ENCODE measurements at regions of chr7 and their contacts with region 1.

Region 1: GRCh38 chr7:101138213-101138870 is 11.4 kb downstream of the SERPINE1 start:
- DNase-seq: peak; percentile 46 to 92 (median 84)
- ATAC-seq: peak; percentile 94
- H3K4me3 ChIP-seq: no peak overlapping the region
- H3K4me3 Mint-ChIP-seq: peak overlapping the region; percentile 22
- H3K27ac ChIP-seq: no peak overlapping the region
- H3K27ac Mint-ChIP-seq: no peak overlapping the region
- H3K4me1 ChIP-seq: peaks cover 5% of the 10 kb centered on the region
- H3K4me1 Mint-ChIP-seq: peaks cover 10% of the 10 kb centered on the region
- H3K27me3 ChIP-seq: no peaks in the 10 kb centered on the region
- H3K27me3 Mint-ChIP-seq: peaks cover 16% of the 10 kb centered on the region
- CTCF ChIP-seq: peak; percentile 65

Region 2: DNA sequence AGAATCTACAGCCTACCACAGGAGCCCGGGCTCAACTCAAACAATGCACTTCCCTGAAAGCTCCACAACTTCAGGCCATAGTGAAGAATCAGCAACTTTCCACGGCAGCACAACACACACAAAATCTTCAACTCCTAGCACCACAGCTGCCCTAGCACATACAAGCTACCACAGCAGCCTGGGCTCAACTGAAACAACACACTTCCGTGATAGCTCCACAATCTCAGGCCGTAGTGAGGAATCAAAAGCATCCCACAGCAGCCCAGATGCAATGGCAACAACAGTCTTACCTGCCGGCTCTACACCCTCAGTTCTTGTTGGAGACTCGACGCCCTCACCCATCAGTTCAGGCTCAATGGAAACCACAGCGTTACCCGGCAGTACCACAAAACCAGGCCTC is 146.7 kb before region 1 on chr7:
- CTCF ChIA-PET with region 1: no interaction called
- POLR2A ChIA-PET with region 1: no interaction called
- intact Hi-C with region 1: no loop called
- DNase-seq: no peak
- ATAC-seq: no peak
- H3K4me3 ChIP-seq: no peak overlapping the region
- H3K4me3 Mint-ChIP-seq: no peak overlapping the region
- H3K27ac ChIP-seq: no peak overlapping the region
- H3K27ac Mint-ChIP-seq: no peak overlapping the region
- H3K4me1 ChIP-seq: no peaks in the 10 kb centered on the region
- H3K4me1 Mint-ChIP-seq: no peaks in the 10 kb centered on the region
- H3K27me3 ChIP-seq: no peaks in the 10 kb centered on the region
- H3K27me3 Mint-ChIP-seq: no peaks in the 10 kb centered on the region
- CTCF ChIP-seq: no peak

Region 3: DNA sequence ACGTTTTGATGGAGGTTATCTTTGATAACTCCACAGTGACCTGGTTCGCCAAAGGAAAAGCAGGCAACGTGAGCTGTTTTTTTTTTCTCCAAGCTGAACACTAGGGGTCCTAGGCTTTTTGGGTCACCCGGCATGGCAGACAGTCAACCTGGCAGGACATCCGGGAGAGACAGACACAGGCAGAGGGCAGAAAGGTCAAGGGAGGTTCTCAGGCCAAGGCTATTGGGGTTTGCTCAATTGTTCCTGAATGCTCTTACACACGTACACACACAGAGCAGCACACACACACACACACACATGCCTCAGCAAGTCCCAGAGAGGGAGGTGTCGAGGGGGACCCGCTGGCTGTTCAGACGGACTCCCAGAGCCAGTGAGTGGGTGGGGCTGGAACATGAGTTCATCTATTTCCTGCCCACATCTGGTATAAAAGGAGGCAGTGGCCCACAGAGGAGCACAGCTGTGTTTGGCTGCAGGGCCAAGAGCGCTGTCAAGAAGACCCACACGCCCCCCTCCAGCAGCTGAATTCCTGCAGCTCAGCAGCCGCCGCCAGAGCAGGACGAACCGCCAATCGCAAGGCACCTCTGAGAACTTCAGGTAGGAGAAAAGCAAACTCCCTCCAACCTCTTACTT is 11.6 kb before region 1 on chr7 and contains the start of gene SERPINE1:
- CTCF ChIA-PET with region 1: interaction called, 10 read pairs
- POLR2A ChIA-PET with region 1: no interaction called
- intact Hi-C with region 1: no loop called
- DNase-seq: peak in 8 of 9 experiments; percentile 27 to 69 (median 62)
- ATAC-seq: peak; percentile 84
- H3K4me3 ChIP-seq: peak within 1 kb of the TSS in 1 of 2 experiments; percentile 31
- H3K4me3 Mint-ChIP-seq: peak within 1 kb of the TSS; percentile 56
- H3K27ac ChIP-seq: no peak within 1 kb of the TSS
- H3K27ac Mint-ChIP-seq: no peak within 1 kb of the TSS
- H3K4me1 ChIP-seq: peaks cover 18% of the 10 kb centered on the region
- H3K4me1 Mint-ChIP-seq: peaks cover 26% of the 10 kb centered on the region
- H3K27me3 ChIP-seq: peaks cover 6 to 7% of the 10 kb centered on the region in 2 experiments
- H3K27me3 Mint-ChIP-seq: peaks cover 57% of the 10 kb centered on the region
- CTCF ChIP-seq: no peak
- total RNA-seq, gene SERPINE1: 0.14 to 0.24 TPM

Region 4: GRCh38 chr7:101165075-101165957 is 27.0 kb after region 1 on chr7 and contains the start of gene VGF:
- CTCF ChIA-PET with region 1: interaction called, 78 read pairs
- POLR2A ChIA-PET with region 1: no interaction called
- intact Hi-C with region 1: no loop called
- DNase-seq: peak; percentile 83 to 96 (median 92)
- ATAC-seq: peak; percentile 79
- H3K4me3 ChIP-seq: no peak within 1 kb of the TSS
- H3K4me3 Mint-ChIP-seq: peak within 1 kb of the TSS; percentile 71
- H3K27ac ChIP-seq: no peak within 1 kb of the TSS
- H3K27ac Mint-ChIP-seq: no peak within 1 kb of the TSS
- H3K4me1 ChIP-seq: peaks cover 61% of the 10 kb centered on the region
- H3K4me1 Mint-ChIP-seq: peaks cover 39% of the 10 kb centered on the region
- H3K27me3 ChIP-seq: peaks cover 51 to 81% of the 10 kb centered on the region in 2 experiments
- H3K27me3 Mint-ChIP-seq: peaks cover 60% of the 10 kb centered on the region
- CTCF ChIP-seq: no peak
- total RNA-seq, gene VGF: not detected

Region 5: GRCh38 chr7:101195884-101196283 is 57.5 kb after region 1 on chr7:
- CTCF ChIA-PET with region 1: interaction called, 136 read pairs
- POLR2A ChIA-PET with region 1: interaction called, 3 read pairs
- intact Hi-C with region 1: no loop called
- DNase-seq: no peak
- ATAC-seq: no peak
- H3K4me3 ChIP-seq: no peak overlapping the region
- H3K4me3 Mint-ChIP-seq: no peak overlapping the region
- H3K27ac ChIP-seq: no peak overlapping the region
- H3K27ac Mint-ChIP-seq: no peak overlapping the region
- H3K4me1 ChIP-seq: no peaks in the 10 kb centered on the region
- H3K4me1 Mint-ChIP-seq: peaks cover 5% of the 10 kb centered on the region
- H3K27me3 ChIP-seq: peaks cover 0 to 9% of the 10 kb centered on the region in 2 experiments
- H3K27me3 Mint-ChIP-seq: peaks cover 14% of the 10 kb centered on the region
- CTCF ChIP-seq: no peak

Region 6: GRCh38 chr7:101287032-101287431 is 148.7 kb after region 1 on chr7:
- CTCF ChIA-PET with region 1: interaction called, 104 read pairs
- POLR2A ChIA-PET with region 1: no interaction called
- intact Hi-C with region 1: no loop called
- DNase-seq: no peak
- ATAC-seq: no peak
- H3K4me3 ChIP-seq: no peak overlapping the region
- H3K4me3 Mint-ChIP-seq: no peak overlapping the region
- H3K27ac ChIP-seq: no peak overlapping the region
- H3K27ac Mint-ChIP-seq: no peak overlapping the region
- H3K4me1 ChIP-seq: peaks cover 4% of the 10 kb centered on the region
- H3K4me1 Mint-ChIP-seq: peaks cover 24% of the 10 kb centered on the region
- H3K27me3 ChIP-seq: peaks cover 0 to 2% of the 10 kb centered on the region in 2 experiments
- H3K27me3 Mint-ChIP-seq: peaks cover 9% of the 10 kb centered on the region
- CTCF ChIP-seq: no peak